ENCODE measurements at regions of chr19 and their contacts with region 1.

Region 1: GRCh38 chr19:4791170-4792018 is at the start of gene FEM1A:
- DNase-seq: peak; percentile 98 to 100 (median 99)
- H3K4me3 ChIP-seq: peak within 1 kb of the TSS; percentile 98
- H3K27ac ChIP-seq: peak within 1 kb of the TSS; percentile 53 to 65
- H3K4me1 ChIP-seq: peaks cover 2% of the 10 kb centered on the region
- H3K27me3 ChIP-seq: no peaks in the 10 kb centered on the region
- CTCF ChIP-seq: peak; percentile 94 to 99 (median 96)
- EP300 ChIP-seq: peak; percentile 99
- POLR2A ChIP-seq: peak; percentile 73
- total RNA-seq, gene FEM1A: 7.4 to 11.4 (median 9.1) TPM

Region 2: GRCh38 chr19:4471403-4472173 is 319.8 kb before region 1 on chr19:
- intact Hi-C with region 1: no loop called
- DNase-seq: peak; percentile 96 to 98 (median 97)
- H3K4me3 ChIP-seq: peak overlapping the region; percentile 99
- H3K27ac ChIP-seq: peak overlapping the region in 1 of 2 donors; percentile 74
- H3K4me1 ChIP-seq: peaks cover 18% of the 10 kb centered on the region
- H3K27me3 ChIP-seq: no peaks in the 10 kb centered on the region
- CTCF ChIP-seq: no peak
- EP300 ChIP-seq: no peak
- POLR2A ChIP-seq: no peak

Region 3: GRCh38 chr19:4669723-4670480 is 121.5 kb before region 1 on chr19 and contains the start of gene MYDGF:
- intact Hi-C with region 1: no loop called
- DNase-seq: peak; percentile 92 to 97 (median 93)
- H3K4me3 ChIP-seq: peak within 1 kb of the TSS; percentile 91
- H3K27ac ChIP-seq: peak within 1 kb of the TSS; percentile 5 to 39
- H3K4me1 ChIP-seq: no peaks in the 10 kb centered on the region
- H3K27me3 ChIP-seq: no peaks in the 10 kb centered on the region
- CTCF ChIP-seq: no peak
- EP300 ChIP-seq: no peak
- POLR2A ChIP-seq: peak; percentile 30
- total RNA-seq, gene MYDGF: 28.6 to 76.1 (median 59.4) TPM

Region 4: GRCh38 chr19:4732680-4733114 is 58.7 kb before region 1 on chr19:
- intact Hi-C with region 1: loop called (anchors 5 kb)
- DNase-seq: peak in 1 of 5 donors; percentile 59
- H3K4me3 ChIP-seq: no peak overlapping the region
- H3K27ac ChIP-seq: no peak overlapping the region
- H3K4me1 ChIP-seq: peaks cover 2% of the 10 kb centered on the region
- H3K27me3 ChIP-seq: no peaks in the 10 kb centered on the region
- CTCF ChIP-seq: peak; percentile 31 to 62 (median 57)
- EP300 ChIP-seq: no peak
- POLR2A ChIP-seq: no peak

Measured in ovary (tissue), 10 donors.